PC-9 (cell line): ENCODE measurements at regions of chr4 and their contacts with region 1.

Region 1: GRCh38 chr4:156875704-156876103 is 95.9 kb downstream of the PDGFC start:
- DNase-seq: peak in 1 of 2 experiments; percentile 22
- H3K4me3 ChIP-seq: no peak overlapping the region
- H3K27ac ChIP-seq: no peak overlapping the region
- H3K4me1 ChIP-seq: 0 out of 2 replicates have a peak, but pooled peaks cover 4% of the 10 kb centered on the region
- H3K27me3 ChIP-seq: no peaks in the 10 kb centered on the region
- CTCF ChIP-seq: no peak

Region 2: DNA sequence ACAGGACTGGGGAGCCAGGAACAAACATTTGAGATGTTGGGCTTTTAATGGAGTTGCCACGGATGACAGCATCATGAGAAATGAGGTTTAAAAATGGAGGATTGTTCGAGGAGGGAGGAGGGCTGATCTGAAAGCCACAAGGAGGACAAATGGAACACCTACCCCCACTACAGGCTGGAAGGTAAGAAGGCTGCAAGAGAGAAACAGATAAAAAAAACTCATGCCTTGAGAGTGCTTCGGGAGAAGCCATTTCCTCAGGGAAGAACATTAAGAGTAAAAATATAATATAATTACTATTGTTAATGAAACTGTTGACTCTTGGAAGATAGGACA is 1379.4 kb before region 1 on chr4:
- CTCF ChIA-PET with region 1: no interaction called
- POLR2A ChIA-PET with region 1: interaction called, 10 read pairs
- intact Hi-C with region 1: no loop called
- DNase-seq: no peak
- H3K4me3 ChIP-seq: no peak overlapping the region
- H3K27ac ChIP-seq: no peak overlapping the region
- H3K4me1 ChIP-seq: no peaks in the 10 kb centered on the region
- H3K27me3 ChIP-seq: no peaks in the 10 kb centered on the region
- CTCF ChIP-seq: no peak

Region 3: DNA sequence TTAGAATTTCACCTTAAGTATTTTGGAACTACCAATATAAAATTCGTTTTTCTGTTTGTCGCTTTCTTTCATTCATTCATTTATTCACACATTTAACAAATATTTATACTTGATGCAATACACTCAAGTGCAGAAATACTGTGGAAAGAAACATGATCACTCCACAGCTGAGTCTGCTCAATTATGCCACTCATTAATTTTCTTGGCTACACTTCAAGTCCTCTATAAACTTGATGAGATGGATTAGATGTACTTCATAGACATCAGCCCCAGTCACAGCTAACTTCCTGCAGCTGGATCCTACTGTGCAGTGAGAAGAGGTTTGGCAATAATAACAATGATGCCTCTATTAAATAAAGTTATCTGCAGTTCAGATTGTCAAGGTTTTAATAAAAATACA is 112.2 kb before region 1 on chr4:
- CTCF ChIA-PET with region 1: no interaction called
- POLR2A ChIA-PET with region 1: no interaction called
- intact Hi-C with region 1: no loop called
- DNase-seq: no peak
- H3K4me3 ChIP-seq: no peak overlapping the region
- H3K27ac ChIP-seq: no peak overlapping the region
- H3K4me1 ChIP-seq: no peaks in the 10 kb centered on the region
- H3K27me3 ChIP-seq: no peaks in the 10 kb centered on the region
- CTCF ChIP-seq: no peak